ENCODE measurements at regions of chr17 and their contacts with region 1.

Region 1: DNA sequence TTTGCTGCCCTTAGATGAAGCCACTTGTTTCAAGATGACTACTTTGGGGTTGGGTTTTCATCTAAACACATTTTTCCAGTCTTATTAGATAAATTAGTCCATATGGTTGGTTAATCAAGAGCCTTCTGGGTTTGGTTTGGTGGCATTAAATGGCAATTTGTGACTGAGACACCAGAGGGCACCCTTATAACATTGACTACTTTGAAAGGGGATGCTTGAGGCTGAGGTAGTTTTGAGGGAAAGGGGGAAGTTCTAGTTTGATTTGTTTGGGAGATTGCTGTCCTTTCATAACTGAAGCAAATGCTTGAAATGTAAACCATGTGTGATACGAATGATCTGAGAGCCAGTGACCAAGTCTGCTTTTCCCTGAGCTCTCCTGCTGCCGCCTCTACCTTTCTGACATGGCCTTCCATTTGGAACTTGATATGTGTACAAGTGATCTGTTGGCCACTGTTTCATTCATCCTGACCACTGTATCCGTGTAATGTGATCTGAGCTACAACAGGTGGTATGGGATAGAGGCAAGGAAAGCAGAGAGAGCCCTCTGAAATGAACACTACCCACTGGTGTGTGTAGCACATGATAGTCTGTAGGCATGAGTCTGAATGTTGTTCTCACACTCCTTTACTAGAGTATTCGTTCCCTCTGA is 5.8 kb upstream of the RARA start:
- DNase-seq: peak; percentile 67
- H3K4me3 ChIP-seq: no peak overlapping the region
- H3K27ac ChIP-seq: no peak overlapping the region
- H3K4me1 ChIP-seq: peaks cover 35% of the 10 kb centered on the region
- H3K27me3 ChIP-seq: no peaks in the 10 kb centered on the region
- CTCF ChIP-seq: peak; percentile 69

Region 2: GRCh38 chr17:40281663-40282062 is 21.5 kb before region 1 on chr17:
- CTCF ChIA-PET with region 1: interaction called, 12 read pairs
- POLR2A ChIA-PET with region 1: no interaction called
- intact Hi-C with region 1: no loop called
- DNase-seq: no peak
- H3K4me3 ChIP-seq: no peak overlapping the region
- H3K27ac ChIP-seq: no peak overlapping the region
- H3K4me1 ChIP-seq: no peaks in the 10 kb centered on the region
- H3K27me3 ChIP-seq: no peaks in the 10 kb centered on the region
- CTCF ChIP-seq: no peak

Region 3: DNA sequence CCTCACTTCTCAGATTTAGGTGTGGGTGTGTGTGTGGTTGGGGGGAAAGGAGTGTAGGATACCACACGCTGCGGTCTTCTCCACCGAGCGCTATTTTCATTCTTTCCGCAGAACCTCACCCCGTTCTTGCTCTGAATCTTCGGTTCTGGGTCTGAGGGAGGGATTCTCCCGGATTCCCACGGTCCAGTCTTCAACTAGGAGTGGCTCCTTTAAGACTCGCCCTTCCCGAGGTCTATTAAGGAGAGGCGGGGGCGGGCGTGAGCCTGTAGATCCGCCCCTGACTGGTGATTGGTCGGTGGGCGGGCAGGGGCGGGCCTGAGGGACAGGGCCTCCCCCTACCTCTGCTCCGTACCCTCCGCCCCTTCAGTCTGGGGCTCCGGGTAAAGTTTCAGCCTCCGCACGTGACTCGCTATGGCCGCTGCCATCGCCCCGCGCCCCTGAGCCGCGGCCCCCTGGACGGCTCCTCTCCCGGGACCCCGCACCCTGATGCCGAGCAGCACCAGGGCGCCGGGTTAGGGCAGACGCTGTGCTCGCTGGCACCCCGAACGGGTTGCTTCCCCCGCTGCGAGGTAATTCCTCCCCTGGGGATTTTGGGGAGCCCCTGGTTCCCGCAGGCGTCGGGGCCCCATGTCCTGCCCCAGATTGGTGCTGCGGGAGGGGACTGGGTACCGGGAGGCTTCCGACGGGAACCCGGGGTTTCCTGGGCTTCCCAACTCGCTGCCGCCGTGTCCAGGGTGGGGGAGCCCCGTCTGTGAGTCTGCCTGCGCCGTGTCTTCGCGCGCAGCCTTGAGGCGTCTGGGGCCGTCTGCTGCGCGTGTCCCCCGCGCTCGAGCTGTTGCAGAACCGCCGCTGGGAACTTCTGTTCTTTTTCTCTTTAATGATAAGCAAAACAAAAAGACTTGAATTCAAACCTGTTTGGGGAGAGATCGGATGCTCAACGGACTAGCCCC is 15.0 kb after region 1 on chr17:
- CTCF ChIA-PET with region 1: interaction called, 23 read pairs
- POLR2A ChIA-PET with region 1: interaction called, 13 read pairs
- intact Hi-C with region 1: no loop called
- DNase-seq: peak; percentile 94
- H3K4me3 ChIP-seq: peak overlapping the region; percentile 71
- H3K27ac ChIP-seq: peak overlapping the region; percentile 78
- H3K4me1 ChIP-seq: peaks cover 51% of the 10 kb centered on the region
- H3K27me3 ChIP-seq: no peaks in the 10 kb centered on the region
- CTCF ChIP-seq: no peak

Region 4: DNA sequence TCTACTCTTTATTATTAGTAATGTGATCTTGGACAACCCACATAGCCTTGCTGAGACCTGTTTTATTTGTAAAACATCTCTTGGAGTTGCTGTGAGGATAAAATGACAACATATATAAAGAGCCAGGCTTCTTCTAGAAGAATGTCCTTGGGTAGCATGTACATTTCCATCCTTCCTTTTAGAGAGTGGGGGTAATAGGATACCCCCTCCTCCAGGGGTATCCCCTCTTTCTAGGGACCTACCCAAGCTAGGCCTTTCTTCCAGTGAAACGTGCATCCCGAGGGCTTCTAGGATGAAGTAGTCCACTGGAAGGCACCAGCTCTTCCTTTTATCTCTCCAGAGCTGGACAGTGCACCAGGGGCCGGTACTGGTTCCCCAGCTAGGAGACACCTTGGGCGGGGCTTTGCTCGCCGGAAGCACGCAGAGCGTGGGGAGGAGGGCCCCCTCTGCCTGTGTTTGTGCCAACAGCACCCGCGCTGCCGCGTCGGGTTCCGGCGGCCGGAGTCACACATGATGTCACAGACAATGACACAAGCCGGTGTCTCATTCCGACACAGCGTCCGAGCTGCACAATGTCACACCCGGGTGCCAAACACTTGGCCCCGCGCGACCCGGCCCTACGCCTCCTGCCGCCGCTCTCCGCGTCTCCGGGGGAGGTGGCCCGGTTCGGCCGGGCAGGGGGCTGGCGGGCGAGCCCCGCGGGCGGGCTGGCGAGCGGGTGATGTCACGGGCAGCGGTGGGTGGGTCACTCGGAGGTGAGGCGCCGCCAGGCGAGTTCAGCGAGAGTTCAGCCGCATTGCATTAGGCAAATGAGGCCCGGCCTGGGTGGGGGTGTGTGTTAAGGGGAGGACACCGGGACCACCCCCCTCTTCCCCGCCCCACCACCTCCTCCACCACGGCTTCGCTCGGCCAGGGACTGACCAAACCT is 38.0 kb after region 1 on chr17:
- CTCF ChIA-PET with region 1: no interaction called
- POLR2A ChIA-PET with region 1: no interaction called
- intact Hi-C with region 1: no loop called
- DNase-seq: no peak
- H3K4me3 ChIP-seq: peak overlapping the region; percentile 63
- H3K27ac ChIP-seq: peak overlapping the region; percentile 79
- H3K4me1 ChIP-seq: peaks cover 23% of the 10 kb centered on the region
- H3K27me3 ChIP-seq: no peaks in the 10 kb centered on the region
- CTCF ChIP-seq: no peak

Region 5: DNA sequence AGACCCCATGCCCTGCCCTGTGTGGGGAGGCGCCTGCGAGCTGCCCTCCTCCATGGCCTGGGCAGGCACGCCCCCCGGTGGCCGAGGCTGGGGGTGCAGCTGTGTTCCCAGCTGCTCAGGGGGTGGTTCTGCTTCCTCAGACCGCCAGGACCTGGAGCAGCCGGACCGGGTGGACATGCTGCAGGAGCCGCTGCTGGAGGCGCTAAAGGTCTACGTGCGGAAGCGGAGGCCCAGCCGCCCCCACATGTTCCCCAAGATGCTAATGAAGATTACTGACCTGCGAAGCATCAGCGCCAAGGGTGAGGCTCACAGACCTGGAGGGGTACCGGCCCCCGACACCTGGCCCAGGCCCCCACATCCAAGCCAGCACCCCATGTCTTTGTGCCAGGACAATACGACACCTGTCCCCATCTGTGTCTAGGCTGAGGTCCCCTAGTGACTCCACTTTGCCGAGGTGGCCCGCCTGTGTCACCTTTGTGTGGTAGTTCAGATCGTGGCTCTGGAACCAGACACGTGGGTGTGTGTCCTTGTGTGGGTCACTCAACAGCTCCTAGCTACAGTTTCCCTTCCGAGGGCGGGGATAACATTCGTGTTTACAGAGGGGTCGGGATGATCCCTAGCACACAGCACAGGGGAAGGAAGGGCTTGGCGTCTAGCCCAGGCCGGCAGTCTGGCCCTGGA is 52.1 kb after region 1 on chr17:
- CTCF ChIA-PET with region 1: interaction called, 16 read pairs
- POLR2A ChIA-PET with region 1: no interaction called
- intact Hi-C with region 1: loop called (anchors 1 kb)
- DNase-seq: peak; percentile 55
- H3K4me3 ChIP-seq: no peak overlapping the region
- H3K27ac ChIP-seq: no peak overlapping the region
- H3K4me1 ChIP-seq: peaks cover 17% of the 10 kb centered on the region
- H3K27me3 ChIP-seq: no peaks in the 10 kb centered on the region
- CTCF ChIP-seq: peak; percentile 76

Region 6: GRCh38 chr17:40362696-40363110 is 59.6 kb after region 1 on chr17:
- CTCF ChIA-PET with region 1: interaction called, 25 read pairs
- POLR2A ChIA-PET with region 1: no interaction called
- intact Hi-C with region 1: no loop called
- DNase-seq: peak; percentile 71
- H3K4me3 ChIP-seq: peak overlapping the region; percentile 42
- H3K27ac ChIP-seq: no peak overlapping the region
- H3K4me1 ChIP-seq: no peaks in the 10 kb centered on the region
- H3K27me3 ChIP-seq: no peaks in the 10 kb centered on the region
- CTCF ChIP-seq: peak; percentile 67

Region 7: DNA sequence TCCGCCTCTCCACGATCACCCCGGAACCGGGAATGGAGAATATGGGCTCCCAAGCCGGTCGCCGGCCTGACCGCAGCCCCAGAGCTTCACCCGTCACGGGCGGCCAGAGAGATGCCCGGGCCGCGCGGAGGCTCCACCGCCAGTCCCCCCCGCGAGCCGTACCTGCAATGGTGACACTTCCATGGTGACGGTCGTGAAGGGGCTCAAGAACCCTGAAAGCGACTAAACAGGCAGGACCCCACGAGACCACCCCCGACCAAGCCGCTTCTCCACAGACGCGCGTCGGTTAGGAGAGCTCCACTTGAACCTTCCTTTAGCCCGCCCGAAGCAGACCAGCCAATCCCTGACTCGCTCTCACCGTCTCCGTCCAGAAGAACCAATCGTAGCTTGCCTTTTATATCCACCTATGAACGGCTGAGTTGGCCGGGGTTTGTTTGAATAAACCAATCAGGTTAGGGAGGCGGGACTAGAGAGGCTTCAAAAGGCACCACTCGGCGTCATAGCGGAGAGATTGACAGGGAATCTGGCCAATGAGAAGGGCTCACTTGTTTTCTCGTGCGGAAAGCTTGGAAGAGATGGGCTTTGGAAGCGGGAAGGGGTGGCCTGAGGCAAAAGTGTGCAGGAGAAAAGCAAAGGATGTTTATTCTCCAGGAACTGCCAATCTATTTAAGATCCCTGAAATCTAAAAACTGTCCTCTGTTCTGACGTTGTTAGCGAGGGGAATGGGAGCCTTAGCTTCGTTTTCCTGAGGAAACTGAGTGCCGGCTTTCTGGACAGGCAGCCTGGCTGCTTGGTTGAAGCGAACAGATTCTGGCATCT is 114.7 kb after region 1 on chr17 and contains the start of gene TOP2A:
- CTCF ChIA-PET with region 1: no interaction called
- POLR2A ChIA-PET with region 1: no interaction called
- intact Hi-C with region 1: loop called (anchors 10 kb)
- DNase-seq: peak; percentile 98
- H3K4me3 ChIP-seq: peak within 1 kb of the TSS; percentile 90
- H3K27ac ChIP-seq: peak within 1 kb of the TSS; percentile 86
- H3K4me1 ChIP-seq: peaks cover 16% of the 10 kb centered on the region
- H3K27me3 ChIP-seq: no peaks in the 10 kb centered on the region
- CTCF ChIP-seq: no peak
- total RNA-seq, gene TOP2A: 188 and 216 TPM in 2 replicates

Region 8: GRCh38 chr17:40993839-40994238 is 690.7 kb after region 1 on chr17 and contains the start of gene KRTAP3-3:
- CTCF ChIA-PET with region 1: no interaction called
- POLR2A ChIA-PET with region 1: no interaction called
- intact Hi-C with region 1: no loop called
- DNase-seq: no peak
- H3K4me3 ChIP-seq: no peak within 1 kb of the TSS
- H3K27ac ChIP-seq: no peak within 1 kb of the TSS
- H3K4me1 ChIP-seq: no peaks in the 10 kb centered on the region
- H3K27me3 ChIP-seq: no peaks in the 10 kb centered on the region
- CTCF ChIP-seq: no peak
- total RNA-seq, gene KRTAP3-3: not detected in 2 replicates